T-cell (primary cell): ENCODE measurements at regions of chr2 and their contacts with region 1.

Region 1: DNA sequence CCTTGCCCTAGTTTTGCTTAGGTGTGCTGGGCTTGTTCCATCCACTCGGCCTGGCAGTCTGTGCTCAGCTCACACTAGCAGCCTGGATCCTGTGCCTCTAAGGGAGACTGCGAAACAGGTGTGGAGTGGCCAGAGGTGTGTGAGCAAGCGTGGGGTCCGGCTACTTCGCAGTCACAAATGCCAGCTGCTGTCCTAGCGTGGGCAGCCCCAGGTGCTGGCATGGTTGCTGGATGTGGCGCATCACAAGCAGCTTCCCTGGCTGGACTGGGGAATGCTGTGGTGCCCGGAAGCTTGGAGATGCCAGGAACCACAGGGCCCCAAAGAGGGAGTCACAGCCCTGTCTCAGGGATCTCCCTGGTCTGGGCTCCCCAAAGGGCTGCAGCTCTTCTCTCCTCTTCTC is 119.0 kb upstream of the TMEFF2 start:
- DNase-seq: no peak
- ATAC-seq: no peak
- H3K4me3 ChIP-seq: no peak overlapping the region
- H3K4me3 Mint-ChIP-seq: no peak overlapping the region
- H3K27ac ChIP-seq: no peak overlapping the region
- H3K27ac Mint-ChIP-seq: no peak overlapping the region
- H3K4me1 ChIP-seq: no peaks in the 10 kb centered on the region
- H3K4me1 Mint-ChIP-seq: no peaks in the 10 kb centered on the region
- H3K27me3 ChIP-seq: peaks cover 0 to 6% of the 10 kb centered on the region in 2 experiments
- H3K27me3 Mint-ChIP-seq: no peaks in the 10 kb centered on the region

Region 2: GRCh38 chr2:191773136-191773535 is 540.6 kb before region 1 on chr2:
- CTCF ChIA-PET with region 1: interaction called in 1 of 2 experiments, 14 read pairs
- POLR2A ChIA-PET with region 1: no interaction called
- DNase-seq: no peak
- ATAC-seq: no peak
- H3K4me3 ChIP-seq: no peak overlapping the region
- H3K4me3 Mint-ChIP-seq: no peak overlapping the region
- H3K27ac ChIP-seq: no peak overlapping the region
- H3K27ac Mint-ChIP-seq: no peak overlapping the region
- H3K4me1 ChIP-seq: no peaks in the 10 kb centered on the region
- H3K4me1 Mint-ChIP-seq: no peaks in the 10 kb centered on the region
- H3K27me3 ChIP-seq: peaks cover 0 to 5% of the 10 kb centered on the region in 2 experiments
- H3K27me3 Mint-ChIP-seq: peaks cover 9 to 16% of the 10 kb centered on the region in 2 donors

Region 3: GRCh38 chr2:192166946-192167345 is 146.8 kb before region 1 on chr2:
- CTCF ChIA-PET with region 1: no interaction called
- POLR2A ChIA-PET with region 1: no interaction called
- DNase-seq: no peak
- ATAC-seq: no peak
- H3K4me3 ChIP-seq: no peak overlapping the region
- H3K4me3 Mint-ChIP-seq: no peak overlapping the region
- H3K27ac ChIP-seq: no peak overlapping the region
- H3K27ac Mint-ChIP-seq: no peak overlapping the region
- H3K4me1 ChIP-seq: no peaks in the 10 kb centered on the region
- H3K4me1 Mint-ChIP-seq: peaks cover 4 to 5% (median 5%) of the 10 kb centered on the region in 3 donors
- H3K27me3 ChIP-seq: peaks cover 0 to 5% of the 10 kb centered on the region in 2 experiments
- H3K27me3 Mint-ChIP-seq: peaks cover 25 to 30% of the 10 kb centered on the region in 2 donors

Region 4: DNA sequence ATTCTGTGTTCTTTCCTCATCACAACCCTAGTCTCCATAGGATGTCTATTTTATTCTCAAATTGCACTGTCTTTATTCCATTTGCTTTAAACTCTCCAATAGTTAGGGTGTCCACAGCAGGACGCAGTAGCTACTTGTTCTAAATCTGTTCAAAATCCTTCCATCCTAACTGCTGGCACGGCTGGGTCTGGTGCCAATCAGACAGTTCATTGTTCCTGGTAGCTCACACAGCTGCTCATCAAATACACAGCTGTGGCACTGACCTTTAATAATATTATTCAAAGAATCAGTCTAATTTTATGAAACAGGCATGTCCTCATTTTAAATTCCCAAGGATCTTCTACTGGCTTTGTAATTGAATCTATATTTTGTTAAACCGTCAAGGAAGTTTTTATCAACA is 59.3 kb before region 1 on chr2:
- CTCF ChIA-PET with region 1: no interaction called
- POLR2A ChIA-PET with region 1: no interaction called
- DNase-seq: no peak
- ATAC-seq: no peak
- H3K4me3 ChIP-seq: no peak overlapping the region
- H3K4me3 Mint-ChIP-seq: no peak overlapping the region
- H3K27ac ChIP-seq: no peak overlapping the region
- H3K27ac Mint-ChIP-seq: no peak overlapping the region
- H3K4me1 ChIP-seq: no peaks in the 10 kb centered on the region
- H3K4me1 Mint-ChIP-seq: no peaks in the 10 kb centered on the region
- H3K27me3 ChIP-seq: no peaks in the 10 kb centered on the region
- H3K27me3 Mint-ChIP-seq: no peaks in the 10 kb centered on the region